Activated T-helper 1 cell treated with anti-CD3 and anti-CD28 coated beads, Interleukin-12 subunit alpha, Interleukin-12 subunit beta, Interleukin-2, Interleukin-4 antibody, amounts not matched to agents 30 ng/mL and 10 ng/mL and 1 ng/mL, durations not matched to agents 14 hours and 24 hours and 36 hours (primary cell): ENCODE measurements at regions of chr9 and their contacts with region 1.

Region 1: GRCh38 chr9:77872863-77873262 is 158.7 kb downstream of the GNAQ start:
- DNase-seq: no peak
- H3K4me3 Mint-ChIP-seq: no peak overlapping the region
- H3K27ac Mint-ChIP-seq: no peak overlapping the region
- H3K4me1 Mint-ChIP-seq: no peaks in the 10 kb centered on the region
- H3K27me3 Mint-ChIP-seq: no peaks in the 10 kb centered on the region

Region 2: GRCh38 chr9:77909306-77909705 is 36.4 kb after region 1 on chr9:
- intact Hi-C with region 1: loop called (anchors 5 kb)
- DNase-seq: peak; percentile 26
- H3K4me3 Mint-ChIP-seq: peak overlapping the region; percentile 72
- H3K27ac Mint-ChIP-seq: peak overlapping the region; percentile 94
- H3K4me1 Mint-ChIP-seq: peaks cover 53% of the 10 kb centered on the region
- H3K27me3 Mint-ChIP-seq: no peaks in the 10 kb centered on the region